Gastrocnemius medialis (tissue), 4 donors: ENCODE measurements at regions of chr9 and their contacts with region 1.

Region 1: DNA sequence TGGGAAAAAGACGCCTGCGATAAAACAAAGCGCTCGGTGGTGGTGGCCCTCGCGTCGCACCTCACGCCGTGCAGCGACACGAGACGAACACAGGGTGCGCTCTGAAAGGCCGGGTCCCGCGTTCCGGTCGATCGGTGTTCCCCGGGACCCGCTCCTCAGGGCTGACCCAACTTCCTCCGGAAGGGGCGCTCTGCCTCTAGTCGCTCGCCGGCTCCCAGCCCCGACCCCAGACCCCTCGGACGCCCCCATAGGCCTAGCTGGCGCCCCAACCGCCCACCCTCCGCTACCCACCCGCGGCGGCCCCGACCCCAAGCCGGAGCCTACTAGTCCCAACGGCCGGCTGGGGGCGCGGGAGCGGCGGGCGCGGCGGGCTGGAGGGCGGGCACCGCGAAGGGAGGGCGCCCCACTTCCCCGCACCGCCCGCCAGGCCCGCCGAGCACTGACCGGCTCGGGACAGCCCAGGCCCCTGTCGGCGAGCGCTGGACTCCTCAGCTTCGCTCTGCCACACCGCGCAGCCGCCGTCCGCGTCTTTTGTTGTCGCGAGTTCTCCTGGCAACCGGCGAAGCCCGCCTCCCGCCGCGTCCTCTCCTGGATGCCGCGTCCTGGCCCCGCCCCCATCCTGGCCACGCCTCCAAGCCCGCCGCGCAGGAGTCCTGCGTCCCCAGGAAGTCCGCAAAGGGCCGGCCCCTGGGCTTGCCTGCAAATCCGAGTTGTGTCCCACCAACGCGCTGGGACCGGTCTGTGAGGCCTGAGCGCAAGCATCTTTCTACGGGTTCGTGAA is at the start of gene KIF27:
- DNase-seq: peak; percentile 96 to 98
- ATAC-seq: peak; percentile 95
- H3K4me3 ChIP-seq: peak within 1 kb of the TSS; percentile 70 to 87 (median 80)
- H3K27ac ChIP-seq: peak within 1 kb of the TSS; percentile 91 to 95 (median 94)
- H3K4me1 ChIP-seq: peaks cover 4 to 10% of the 10 kb centered on the region in 2 donors
- H3K27me3 ChIP-seq: no peaks in the 10 kb centered on the region
- CTCF ChIP-seq: peak; percentile 44 to 62 (median 52)
- POLR2A ChIP-seq: peak; percentile 85 to 88
- total RNA-seq, gene KIF27: 1.7 to 4.1 (median 2.2) TPM

Region 2: DNA sequence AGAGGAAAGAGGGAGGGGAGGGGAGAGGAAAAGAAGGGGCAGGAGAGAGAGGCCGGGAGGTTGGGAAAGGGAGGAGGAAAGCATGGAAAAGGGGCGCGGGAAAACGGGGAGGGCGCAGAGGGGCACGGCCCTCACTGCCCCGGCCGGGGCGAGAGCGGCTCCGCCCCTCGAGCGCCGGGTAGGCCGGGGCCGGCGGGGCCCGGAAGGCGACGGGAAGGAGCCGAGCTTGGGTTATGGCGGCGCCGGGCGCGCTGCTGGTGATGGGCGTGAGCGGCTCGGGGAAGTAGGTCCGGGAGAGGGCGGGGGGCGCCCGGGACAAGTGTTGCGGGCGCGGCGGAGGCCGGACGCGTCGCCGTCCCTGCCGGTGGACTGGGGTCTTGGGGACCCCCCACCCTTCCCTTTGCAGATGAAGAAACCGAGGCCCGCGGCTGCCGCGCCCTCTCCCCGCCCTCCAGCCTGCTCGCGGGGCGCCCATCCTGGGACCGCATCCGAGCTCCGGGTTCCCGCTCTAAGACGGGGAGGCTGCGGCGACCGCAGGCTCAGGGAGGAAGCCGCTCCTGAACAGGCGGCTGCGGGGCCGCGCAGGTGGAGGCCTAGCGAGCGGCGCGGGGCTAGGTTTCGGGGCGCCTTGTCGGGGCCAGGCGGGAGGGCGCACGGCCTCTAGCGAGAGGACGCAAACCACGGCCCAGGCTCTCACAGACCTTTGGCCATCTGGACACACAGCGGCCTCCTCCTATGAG is 298.0 kb before region 1 on chr9 and contains the start of gene IDNK:
- in situ Hi-C with region 1: loop called in 2 of 4 experiments (anchors 25 kb)
- intact Hi-C with region 1: loop called (anchors 5 kb)
- DNase-seq: peak in 1 of 2 donors; percentile 9
- ATAC-seq: peak; percentile 40 to 67
- H3K4me3 ChIP-seq: peak within 1 kb of the TSS; percentile 70 to 84 (median 78)
- H3K27ac ChIP-seq: peak within 1 kb of the TSS; percentile 67 to 73 (median 70)
- H3K4me1 ChIP-seq: peaks cover 6 to 12% of the 10 kb centered on the region in 2 donors
- H3K27me3 ChIP-seq: no peaks in the 10 kb centered on the region
- CTCF ChIP-seq: peak in 1 of 5 experiments; percentile 10
- POLR2A ChIP-seq: peak in 1 of 2 donors; percentile 15
- total RNA-seq, gene IDNK: 0.60 to 2.9 (median 2.5) TPM in 3 of 4 donors, not detected in the other

Region 3: GRCh38 chr9:83707768-83708514 is 213.2 kb before region 1 on chr9 and contains the start of gene UBQLN1:
- in situ Hi-C with region 1: no loop called
- intact Hi-C with region 1: no loop called
- DNase-seq: peak; percentile 87 to 94
- ATAC-seq: peak; percentile 82
- H3K4me3 ChIP-seq: peak within 1 kb of the TSS; percentile 70 to 92 (median 82)
- H3K27ac ChIP-seq: peak within 1 kb of the TSS; percentile 96 to 99 (median 98)
- H3K4me1 ChIP-seq: peaks cover 25 to 40% of the 10 kb centered on the region in 2 donors
- H3K27me3 ChIP-seq: no peaks in the 10 kb centered on the region
- CTCF ChIP-seq: no peak
- POLR2A ChIP-seq: peak; percentile 98
- total RNA-seq, gene UBQLN1: 202 to 266 (median 231) TPM

Region 4: DNA sequence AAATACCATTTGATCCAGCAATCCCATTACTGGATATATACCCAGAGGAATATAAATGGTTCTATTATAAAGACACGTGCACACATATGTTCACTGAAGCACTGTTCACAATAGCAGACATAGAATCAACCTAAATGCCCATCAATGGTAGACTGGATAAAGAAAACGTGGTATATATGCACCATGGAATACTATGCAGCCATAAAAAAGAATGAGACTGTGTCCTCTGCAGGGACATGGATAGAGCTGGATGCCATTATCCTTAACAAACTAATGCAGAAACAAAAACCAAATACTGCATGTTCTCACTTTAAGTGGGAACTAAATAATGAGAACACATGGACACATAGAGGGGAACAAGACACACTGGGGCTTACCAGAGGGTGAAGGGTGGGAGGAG is 143.0 kb before region 1 on chr9:
- in situ Hi-C with region 1: no loop called
- intact Hi-C with region 1: no loop called
- DNase-seq: no peak
- ATAC-seq: no peak
- H3K4me3 ChIP-seq: no peak overlapping the region
- H3K27ac ChIP-seq: no peak overlapping the region
- H3K4me1 ChIP-seq: no peaks in the 10 kb centered on the region
- H3K27me3 ChIP-seq: no peaks in the 10 kb centered on the region
- CTCF ChIP-seq: no peak
- POLR2A ChIP-seq: no peak

Region 5: DNA sequence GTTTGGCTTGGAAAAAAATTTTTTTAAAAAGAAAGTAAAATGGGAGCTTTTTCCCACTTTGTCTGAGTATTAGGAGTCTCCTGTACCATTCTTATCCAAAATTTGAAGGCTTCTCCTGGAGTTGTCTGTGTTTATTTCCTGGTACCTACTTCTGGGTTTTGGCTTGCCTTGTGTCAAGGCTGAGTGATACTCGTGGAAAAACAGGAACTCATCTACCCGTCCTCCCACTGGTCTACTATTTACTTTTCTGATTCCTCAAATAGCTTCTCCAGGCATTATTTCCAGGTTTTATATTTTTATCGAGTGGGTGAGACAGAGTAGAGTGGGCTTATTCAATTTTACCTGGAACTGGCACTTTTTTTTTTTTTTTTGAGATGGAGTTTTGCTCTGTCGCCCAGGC is 158.9 kb after region 1 on chr9:
- in situ Hi-C with region 1: no loop called
- intact Hi-C with region 1: no loop called
- DNase-seq: no peak
- ATAC-seq: no peak
- H3K4me3 ChIP-seq: no peak overlapping the region
- H3K27ac ChIP-seq: no peak overlapping the region
- H3K4me1 ChIP-seq: peaks cover 0 to 3% of the 10 kb centered on the region in 2 donors
- H3K27me3 ChIP-seq: no peaks in the 10 kb centered on the region
- CTCF ChIP-seq: no peak
- POLR2A ChIP-seq: no peak